ENCODE measurements at regions of chr11 and their contacts with region 1.

Region 1: GRCh38 chr11:57493507-57494503 is 21.7 kb downstream of the SLC43A1 start:
- DNase-seq: peak; percentile 95 to 96
- H3K4me3 ChIP-seq: no peak overlapping the region
- H3K4me3 Mint-ChIP-seq: peak overlapping the region; percentile 25
- H3K27ac Mint-ChIP-seq: peak overlapping the region; percentile 96
- H3K4me1 ChIP-seq: peaks cover 40% of the 10 kb centered on the region
- H3K4me1 Mint-ChIP-seq: peaks cover 28% of the 10 kb centered on the region
- H3K27me3 ChIP-seq: no peaks in the 10 kb centered on the region
- H3K27me3 Mint-ChIP-seq: no peaks in the 10 kb centered on the region
- CTCF ChIP-seq: peak; percentile 95 to 97

Region 2: GRCh38 chr11:57456960-57457642 is 36.7 kb before region 1 on chr11:
- CTCF ChIA-PET with region 1: interaction called, 13 read pairs
- POLR2A ChIA-PET with region 1: no interaction called
- intact Hi-C with region 1: loop called (anchors 1 kb)
- DNase-seq: peak; percentile 88 to 92
- H3K4me3 ChIP-seq: no peak overlapping the region
- H3K4me3 Mint-ChIP-seq: peak overlapping the region; percentile 85
- H3K27ac Mint-ChIP-seq: no peak overlapping the region
- H3K4me1 ChIP-seq: peaks cover 28% of the 10 kb centered on the region
- H3K4me1 Mint-ChIP-seq: peaks cover 20% of the 10 kb centered on the region
- H3K27me3 ChIP-seq: peaks cover 3% of the 10 kb centered on the region; the same call in 1 of the 2 replicates
- H3K27me3 Mint-ChIP-seq: peaks cover 15% of the 10 kb centered on the region
- CTCF ChIP-seq: peak; percentile 98 to 99

Region 3: GRCh38 chr11:57515332-57516060 is 21.7 kb after region 1 on chr11 and contains the start of gene SLC43A1:
- CTCF ChIA-PET with region 1: interaction called, 34 read pairs
- POLR2A ChIA-PET with region 1: interaction called, 7 read pairs
- intact Hi-C with region 1: loop called (anchors 1 kb)
- DNase-seq: peak; percentile 66 to 75
- H3K4me3 ChIP-seq: peak within 1 kb of the TSS; percentile 79
- H3K4me3 Mint-ChIP-seq: peak within 1 kb of the TSS; percentile 91
- H3K27ac Mint-ChIP-seq: peak within 1 kb of the TSS; percentile 82
- H3K4me1 ChIP-seq: peaks cover 8% of the 10 kb centered on the region
- H3K4me1 Mint-ChIP-seq: no peaks in the 10 kb centered on the region
- H3K27me3 ChIP-seq: no peaks in the 10 kb centered on the region
- H3K27me3 Mint-ChIP-seq: no peaks in the 10 kb centered on the region
- CTCF ChIP-seq: no peak
- total RNA-seq, gene SLC43A1: 71.7 and 80.5 TPM in 2 replicates

Region 4: GRCh38 chr11:57562596-57562995 is 68.8 kb after region 1 on chr11:
- CTCF ChIA-PET with region 1: interaction called, 10 read pairs
- POLR2A ChIA-PET with region 1: interaction called, 4 read pairs
- intact Hi-C with region 1: loop called (anchors 2 kb)
- DNase-seq: peak in 1 of 2 experiments; percentile 53
- H3K4me3 ChIP-seq: no peak overlapping the region
- H3K4me3 Mint-ChIP-seq: no peak overlapping the region
- H3K27ac Mint-ChIP-seq: peak overlapping the region; percentile 19
- H3K4me1 ChIP-seq: peaks cover 6% of the 10 kb centered on the region; the same call in 1 of the 2 replicates
- H3K4me1 Mint-ChIP-seq: peaks cover 7% of the 10 kb centered on the region
- H3K27me3 ChIP-seq: no peaks in the 10 kb centered on the region
- H3K27me3 Mint-ChIP-seq: no peaks in the 10 kb centered on the region
- CTCF ChIP-seq: peak; percentile 26 to 30

Region 5: GRCh38 chr11:57644748-57645688 is 151.2 kb after region 1 on chr11:
- CTCF ChIA-PET with region 1: interaction called, 25 read pairs
- POLR2A ChIA-PET with region 1: no interaction called
- intact Hi-C with region 1: loop called (anchors 1 kb)
- DNase-seq: peak; percentile 86 to 91
- H3K4me3 ChIP-seq: no peak overlapping the region
- H3K4me3 Mint-ChIP-seq: no peak overlapping the region
- H3K27ac Mint-ChIP-seq: no peak overlapping the region
- H3K4me1 ChIP-seq: peaks cover 17% of the 10 kb centered on the region
- H3K4me1 Mint-ChIP-seq: peaks cover 8% of the 10 kb centered on the region
- H3K27me3 ChIP-seq: peaks cover 2% of the 10 kb centered on the region; the same call in 1 of the 2 replicates
- H3K27me3 Mint-ChIP-seq: peaks cover 9% of the 10 kb centered on the region
- CTCF ChIP-seq: peak; percentile 91 to 96

Region 6: GRCh38 chr11:57712256-57713150 is 218.7 kb after region 1 on chr11 and contains the start of gene TMX2:
- CTCF ChIA-PET with region 1: no interaction called
- POLR2A ChIA-PET with region 1: no interaction called
- intact Hi-C with region 1: no loop called
- DNase-seq: peak; percentile 95 to 98
- H3K4me3 ChIP-seq: peak within 1 kb of the TSS; percentile 91
- H3K4me3 Mint-ChIP-seq: peak within 1 kb of the TSS; percentile 97
- H3K27ac Mint-ChIP-seq: peak within 1 kb of the TSS; percentile 99
- H3K4me1 ChIP-seq: peaks cover 6% of the 10 kb centered on the region; the same call in 1 of the 2 replicates
- H3K4me1 Mint-ChIP-seq: peaks cover 18% of the 10 kb centered on the region
- H3K27me3 ChIP-seq: no peaks in the 10 kb centered on the region
- H3K27me3 Mint-ChIP-seq: no peaks in the 10 kb centered on the region
- CTCF ChIP-seq: no peak
- total RNA-seq, gene TMX2: 150 and 152 TPM in 2 replicates